Mammary epithelial cell (primary cell): ENCODE measurements at regions of chr4 and their contacts with region 1.

Region 1: DNA sequence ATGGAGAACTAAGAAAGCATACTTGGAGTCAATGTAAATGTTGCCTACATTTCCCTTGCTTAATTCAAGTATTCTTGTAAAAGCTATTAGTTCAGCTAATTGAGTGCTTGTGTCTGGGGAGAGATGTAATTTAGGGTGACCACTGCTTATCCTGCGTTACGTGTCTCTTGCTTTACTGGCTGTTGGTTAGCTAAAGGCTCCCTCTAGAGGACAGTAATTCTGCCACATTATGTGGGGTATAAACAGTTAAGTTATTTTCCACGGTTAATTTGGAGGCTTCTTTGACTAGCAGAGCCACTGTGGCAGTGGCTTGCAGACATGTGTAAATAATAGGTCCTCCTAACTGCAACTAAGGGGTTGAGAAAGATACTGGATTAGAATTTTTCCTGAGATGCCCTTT is 25.3 kb upstream of the NAF1 start:
- DNase-seq: peak; percentile 23
- H3K4me3 ChIP-seq: no peak overlapping the region
- H3K27ac ChIP-seq: no peak overlapping the region
- H3K4me1 ChIP-seq: no peaks in the 10 kb centered on the region
- H3K27me3 ChIP-seq: no peaks in the 10 kb centered on the region
- CTCF ChIP-seq: peak; percentile 27 to 58

Region 2: GRCh38 chr4:162921178-162921785 is 270.7 kb before region 1 on chr4:
- CTCF ChIA-PET with region 1: no interaction called
- dilution Hi-C with region 1: no loop called
- in situ Hi-C with region 1: no loop called
- intact Hi-C with region 1: no loop called
- DNase-seq: no peak
- H3K4me3 ChIP-seq: no peak overlapping the region
- H3K27ac ChIP-seq: no peak overlapping the region
- H3K4me1 ChIP-seq: no peaks in the 10 kb centered on the region
- H3K27me3 ChIP-seq: no peaks in the 10 kb centered on the region
- CTCF ChIP-seq: no peak

Region 3: GRCh38 chr4:163048447-163048846 is 143.6 kb before region 1 on chr4:
- CTCF ChIA-PET with region 1: no interaction called
- dilution Hi-C with region 1: no loop called
- in situ Hi-C with region 1: no loop called
- intact Hi-C with region 1: loop called (anchors 1 kb)
- DNase-seq: peak; percentile 21
- H3K4me3 ChIP-seq: no peak overlapping the region
- H3K27ac ChIP-seq: no peak overlapping the region
- H3K4me1 ChIP-seq: no peaks in the 10 kb centered on the region
- H3K27me3 ChIP-seq: no peaks in the 10 kb centered on the region
- CTCF ChIP-seq: peak; percentile 59 to 72

Region 4: GRCh38 chr4:163111593-163111992 is 80.4 kb before region 1 on chr4:
- CTCF ChIA-PET with region 1: no interaction called
- dilution Hi-C with region 1: no loop called
- in situ Hi-C with region 1: no loop called
- intact Hi-C with region 1: loop called (anchors 5 kb)
- DNase-seq: no peak
- H3K4me3 ChIP-seq: no peak overlapping the region
- H3K27ac ChIP-seq: no peak overlapping the region
- H3K4me1 ChIP-seq: no peaks in the 10 kb centered on the region
- H3K27me3 ChIP-seq: no peaks in the 10 kb centered on the region
- CTCF ChIP-seq: peak in 1 of 2 donors; percentile 21

Region 5: DNA sequence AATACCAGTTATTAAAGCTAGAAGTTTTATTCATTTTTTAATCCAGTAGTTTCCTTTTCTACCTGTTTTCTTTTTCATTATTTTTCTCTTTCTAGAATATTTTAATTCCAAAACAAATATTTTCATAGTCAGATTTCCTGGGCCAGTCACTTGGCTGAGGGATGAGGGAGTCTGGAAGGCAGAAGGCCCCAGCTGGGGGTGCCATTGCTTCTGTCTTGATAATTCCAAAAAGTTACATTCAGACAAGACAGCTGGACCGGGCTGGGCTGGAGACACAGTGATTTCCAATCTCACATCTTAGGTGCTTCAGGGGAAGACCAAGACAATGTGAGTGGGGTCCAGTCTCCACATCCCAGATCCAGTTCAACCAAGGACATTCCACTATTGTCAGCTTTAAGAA is 566.0 kb after region 1 on chr4:
- CTCF ChIA-PET with region 1: no interaction called
- dilution Hi-C with region 1: no loop called
- in situ Hi-C with region 1: no loop called
- intact Hi-C with region 1: no loop called
- DNase-seq: no peak
- H3K4me3 ChIP-seq: no peak overlapping the region
- H3K27ac ChIP-seq: no peak overlapping the region
- H3K4me1 ChIP-seq: no peaks in the 10 kb centered on the region
- H3K27me3 ChIP-seq: no peaks in the 10 kb centered on the region
- CTCF ChIP-seq: peak in 1 of 2 donors; percentile 13